Sigmoid colon (tissue), 7 donors: ENCODE measurements at regions of chr7 and their contacts with region 1.

Region 1: DNA sequence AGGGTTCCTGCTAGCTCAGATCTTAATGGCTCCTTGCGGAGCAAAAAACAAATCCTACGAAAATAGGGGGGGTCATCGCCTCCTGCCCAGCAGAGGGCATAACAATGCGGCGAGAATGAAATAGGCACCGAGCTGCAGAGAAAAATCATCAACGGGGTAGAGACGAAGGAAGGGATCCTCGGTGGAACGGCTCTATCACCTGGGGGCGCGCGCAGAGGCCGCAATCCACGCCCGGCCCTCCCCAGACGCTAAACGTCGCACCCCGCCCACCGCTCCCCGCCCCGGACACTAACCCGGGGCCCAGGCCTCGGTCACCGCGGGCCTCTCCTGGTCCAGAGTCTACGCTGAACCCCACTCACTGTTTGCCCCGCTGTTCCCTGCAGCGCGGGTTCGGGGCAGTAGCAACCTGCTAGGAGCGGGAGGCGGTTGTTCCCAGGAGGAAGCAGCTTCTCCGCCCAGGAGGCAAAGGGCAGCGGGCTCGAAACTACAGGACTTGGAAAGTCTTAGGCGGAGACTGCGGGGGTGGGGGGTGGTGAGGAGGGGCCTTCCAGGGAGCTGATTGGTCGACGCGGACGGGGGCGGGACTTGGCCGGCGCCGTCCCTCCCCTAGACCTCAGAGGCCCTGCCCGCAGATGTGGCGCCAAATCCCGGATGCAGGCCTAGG is at the start of gene TCAF1:
- DNase-seq: peak; percentile 98
- H3K4me3 ChIP-seq: peak within 1 kb of the TSS; percentile 57 to 77 (median 72)
- H3K27ac ChIP-seq: peak within 1 kb of the TSS; percentile 89 to 96 (median 94)
- H3K4me1 ChIP-seq: peaks cover 0 to 28% (median 22%) of the 10 kb centered on the region in 4 donors
- H3K27me3 ChIP-seq: no peaks in the 10 kb centered on the region
- CTCF ChIP-seq: peak in 2 of 4 experiments; percentile 12 to 14
- EP300 ChIP-seq: no peak
- POLR2A ChIP-seq: peak; percentile 66
- total RNA-seq, gene TCAF1: 40.8 to 56.8 (median 48.2) TPM

Region 2: GRCh38 chr7:143884969-143885559 is 16.7 kb before region 1 on chr7:
- intact Hi-C with region 1: loop called (anchors 2 kb)
- DNase-seq: peak; percentile 79
- H3K4me3 ChIP-seq: peak overlapping the region; percentile 29 to 61 (median 50)
- H3K27ac ChIP-seq: peak overlapping the region; percentile 10 to 84 (median 74)
- H3K4me1 ChIP-seq: peaks cover 0 to 49% (median 24%) of the 10 kb centered on the region in 4 donors
- H3K27me3 ChIP-seq: no peaks in the 10 kb centered on the region
- CTCF ChIP-seq: no peak
- EP300 ChIP-seq: no peak
- POLR2A ChIP-seq: no peak

Region 3: GRCh38 chr7:143929224-143929920 is 27.6 kb after region 1 on chr7:
- intact Hi-C with region 1: no loop called
- DNase-seq: no peak
- H3K4me3 ChIP-seq: no peak overlapping the region
- H3K27ac ChIP-seq: no peak overlapping the region
- H3K4me1 ChIP-seq: no peaks in the 10 kb centered on the region
- H3K27me3 ChIP-seq: no peaks in the 10 kb centered on the region
- CTCF ChIP-seq: no peak
- EP300 ChIP-seq: no peak
- POLR2A ChIP-seq: no peak

Region 4: DNA sequence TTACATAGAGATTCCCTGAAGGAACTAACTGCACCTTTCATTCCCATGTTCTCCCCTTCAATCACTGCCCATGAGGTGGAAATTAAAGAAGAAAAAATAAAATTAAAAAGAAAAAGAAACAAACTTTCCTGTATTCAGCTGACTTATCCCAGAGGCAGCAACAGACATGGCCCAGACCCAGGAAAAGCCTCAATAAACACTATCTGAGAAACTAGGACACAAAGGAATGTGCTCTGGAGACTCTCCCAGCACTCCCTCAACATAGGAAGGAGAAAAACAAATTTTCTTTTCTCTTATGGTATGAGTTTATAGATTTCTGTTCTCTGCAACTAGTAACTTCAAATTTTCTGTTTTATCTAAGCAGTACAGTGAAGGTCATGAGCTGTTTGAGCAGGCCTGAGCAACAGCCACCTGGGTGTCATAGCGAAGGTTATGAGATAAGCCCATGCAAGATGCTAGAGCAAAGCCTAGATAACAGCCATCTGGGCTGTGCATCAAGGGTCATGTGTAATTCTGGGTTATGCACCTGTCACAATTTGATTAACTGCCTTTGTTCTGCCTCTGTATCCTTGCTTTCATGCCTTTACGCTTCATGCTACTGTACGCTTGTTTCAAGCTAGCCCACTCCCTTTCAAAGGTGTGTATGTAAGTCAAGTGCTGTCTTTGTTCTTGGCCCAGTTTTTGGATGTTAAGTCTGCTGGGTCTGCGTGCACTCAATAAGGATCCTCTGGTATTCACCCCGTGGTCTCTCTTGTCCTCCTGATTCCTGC is 87.4 kb after region 1 on chr7:
- intact Hi-C with region 1: loop called (anchors 5 kb)
- DNase-seq: no peak
- H3K4me3 ChIP-seq: no peak overlapping the region
- H3K27ac ChIP-seq: peak overlapping the region; percentile 23 to 52 (median 42)
- H3K4me1 ChIP-seq: peaks cover 0 to 44% (median 38%) of the 10 kb centered on the region in 4 donors
- H3K27me3 ChIP-seq: no peaks in the 10 kb centered on the region
- CTCF ChIP-seq: no peak
- EP300 ChIP-seq: no peak
- POLR2A ChIP-seq: no peak

Region 5: GRCh38 chr7:144835652-144836544 is 934.1 kb after region 1 on chr7 and contains the start of gene TPK1:
- intact Hi-C with region 1: loop called (anchors 10 kb)
- DNase-seq: peak; percentile 94
- H3K4me3 ChIP-seq: peak within 1 kb of the TSS; percentile 52 to 93 (median 73)
- H3K27ac ChIP-seq: peak within 1 kb of the TSS; percentile 93 to 97 (median 96)
- H3K4me1 ChIP-seq: peaks cover 0 to 15% (median 8%) of the 10 kb centered on the region in 4 donors
- H3K27me3 ChIP-seq: no peaks in the 10 kb centered on the region
- CTCF ChIP-seq: no peak
- EP300 ChIP-seq: peak in 1 of 4 donors; percentile 29
- POLR2A ChIP-seq: peak; percentile 46 to 51
- total RNA-seq, gene TPK1: 4.1 to 14.3 (median 6.8) TPM